ENCODE measurements at regions of chr10 and their contacts with region 1.

Region 1: DNA sequence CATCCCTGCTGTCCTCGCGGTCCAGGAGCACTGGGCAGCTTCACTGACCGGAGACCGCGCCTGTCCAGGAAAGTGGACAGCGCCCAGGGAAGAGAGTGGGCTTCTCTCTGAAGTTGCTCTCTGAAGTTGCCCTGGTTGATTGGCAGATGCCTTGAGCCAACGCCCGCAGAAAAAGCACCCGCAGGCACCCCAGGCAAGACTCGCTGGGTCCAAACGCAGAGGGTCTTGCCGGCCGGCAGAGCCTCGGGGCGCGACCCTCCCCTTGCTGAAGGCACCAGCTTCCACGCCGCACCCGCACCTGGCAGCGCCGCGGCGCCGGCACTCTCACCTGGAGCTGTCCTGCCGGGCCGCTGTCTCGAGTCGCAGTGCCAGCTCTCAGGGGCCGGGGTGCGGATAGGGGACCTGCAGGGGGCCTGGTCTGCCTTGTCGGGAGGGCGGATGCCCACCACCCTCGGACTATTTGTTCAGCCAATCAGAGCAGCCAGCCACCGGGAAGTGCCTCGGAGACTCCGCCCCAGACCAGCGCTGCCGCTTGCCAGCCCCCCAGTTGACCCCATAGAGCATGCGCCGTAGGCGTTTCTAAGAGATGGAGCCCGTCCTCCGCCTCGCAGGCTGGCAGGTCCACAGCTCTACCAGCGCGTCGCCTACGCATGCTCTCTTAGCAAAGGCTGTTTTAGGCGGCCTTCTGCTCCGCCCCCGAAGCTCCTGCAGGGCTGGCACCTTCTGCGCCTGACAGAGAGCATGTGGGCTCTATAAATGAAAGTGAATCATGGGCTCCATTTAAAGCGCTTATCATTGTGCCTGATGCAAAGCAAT is at the start of gene LIPA:
- DNase-seq: peak; percentile 95 to 96
- ATAC-seq: peak; percentile 99 to 100 (median 99)
- H3K4me3 ChIP-seq: peak within 1 kb of the TSS; percentile 79 to 99 (median 82)
- H3K27ac ChIP-seq: peak within 1 kb of the TSS; percentile 44 to 89 (median 82)
- H3K4me1 ChIP-seq: peaks cover 0 to 37% (median 8%) of the 10 kb centered on the region in 9 donors
- H3K27me3 ChIP-seq: no peaks in the 10 kb centered on the region
- CTCF ChIP-seq: no peak
- total RNA-seq, gene LIPA: 12.4 to 58.5 (median 15.3) TPM

Region 2: DNA sequence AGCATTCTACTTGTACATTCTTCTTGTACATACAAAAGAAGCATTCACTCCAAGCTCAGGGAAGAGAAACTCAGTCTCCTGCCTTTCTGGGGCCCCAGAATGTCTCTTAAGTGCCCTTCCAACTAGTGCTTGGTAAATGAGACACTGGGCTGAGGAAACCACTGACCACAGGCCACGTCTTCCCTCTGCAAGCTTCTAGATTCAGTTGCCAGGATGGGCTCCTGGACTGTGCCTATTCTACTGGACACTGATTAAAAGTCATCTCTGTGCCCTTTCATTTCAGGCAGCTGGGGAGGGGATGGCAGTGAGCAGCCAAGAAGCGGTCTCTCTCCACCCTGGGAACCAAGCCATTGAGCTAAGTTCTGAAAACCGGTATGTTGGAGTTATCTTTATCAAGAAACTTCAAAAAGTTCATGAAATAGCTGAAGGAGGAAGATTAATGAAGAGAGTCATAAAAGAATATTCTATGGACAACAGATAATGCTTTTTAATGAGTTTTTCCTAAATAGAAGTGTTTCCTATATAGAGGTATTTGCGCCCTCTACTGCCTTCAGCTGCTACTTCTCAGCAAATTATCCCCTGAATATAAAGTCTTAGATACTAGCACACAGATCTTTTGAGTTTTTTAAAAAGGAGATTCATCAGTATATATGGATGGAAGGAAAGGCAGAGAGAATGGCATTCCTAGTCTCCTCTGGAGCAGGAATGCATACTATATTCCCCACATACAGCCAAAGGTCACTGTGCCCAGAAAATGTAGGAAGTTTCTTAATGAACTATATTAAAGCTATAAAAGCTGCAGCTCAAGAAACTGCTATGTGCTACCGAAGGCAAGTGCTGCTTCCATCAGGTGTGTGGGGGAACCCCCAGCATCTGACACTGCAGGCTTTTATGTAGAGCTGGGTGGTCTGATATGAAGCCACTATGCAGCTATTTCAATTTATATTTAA is 117.8 kb after region 1 on chr10:
- intact Hi-C with region 1: loop called in 1 of 10 experiments (anchors 5 kb)
- DNase-seq: no peak
- ATAC-seq: peak in 4 of 8 donors; percentile 11 to 36 (median 28)
- H3K4me3 ChIP-seq: no peak overlapping the region
- H3K27ac ChIP-seq: peak overlapping the region in 4 of 10 donors; percentile 29 to 57 (median 42)
- H3K4me1 ChIP-seq: peaks cover 10 to 43% (median 26%) of the 10 kb centered on the region in 9 donors
- H3K27me3 ChIP-seq: no peaks in the 10 kb centered on the region
- CTCF ChIP-seq: peak in 8 of 9 donors; percentile 36 to 68 (median 60)

Region 3: DNA sequence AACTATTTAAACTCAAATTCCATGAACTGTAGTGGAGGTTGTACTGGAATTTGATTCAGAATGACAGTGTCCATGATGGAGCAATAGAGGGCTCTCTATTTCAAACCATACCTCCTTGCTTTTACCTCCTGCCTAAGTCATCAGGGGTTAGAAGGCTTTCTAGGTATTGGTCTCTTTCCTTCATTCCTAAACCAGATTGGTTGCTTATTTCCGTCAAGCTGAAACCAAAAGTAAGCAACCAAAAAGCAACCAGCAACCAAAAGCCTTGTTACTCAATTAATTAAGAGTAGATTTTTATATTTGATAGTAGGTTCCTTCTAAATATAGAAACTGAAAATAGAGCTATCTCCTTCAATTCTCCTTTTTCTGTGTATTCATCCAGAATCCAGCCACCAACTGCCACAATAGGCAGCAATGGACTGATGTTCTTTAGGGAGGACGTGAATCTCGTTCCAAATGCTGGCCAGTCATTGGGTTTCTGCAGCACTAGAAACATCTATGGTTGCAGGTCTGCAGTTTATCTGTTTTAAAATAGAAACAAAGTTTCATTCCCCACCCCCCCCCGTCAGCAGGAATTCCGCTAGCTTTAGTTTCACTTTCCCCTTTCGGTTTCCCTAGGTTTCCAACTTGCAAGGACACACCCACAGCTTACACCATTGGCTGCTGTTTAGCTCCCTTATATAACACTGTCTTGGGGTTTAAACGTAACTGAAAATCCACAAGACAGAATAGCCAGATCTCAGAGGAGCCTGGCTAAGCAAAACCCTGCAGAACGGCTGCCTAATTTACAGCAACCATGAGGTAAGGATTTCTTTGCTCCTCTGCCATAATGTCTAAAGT is 140.5 kb after region 1 on chr10 and contains the start of gene IFIT1:
- intact Hi-C with region 1: loop called in 2 of 10 experiments (anchors 5 kb)
- DNase-seq: peak in 1 of 2 donors; percentile 86
- ATAC-seq: peak; percentile 92 to 97 (median 96)
- H3K4me3 ChIP-seq: peak within 1 kb of the TSS; percentile 19 to 78 (median 62)
- H3K27ac ChIP-seq: peak within 1 kb of the TSS; percentile 55 to 97 (median 88)
- H3K4me1 ChIP-seq: peaks cover 0 to 61% (median 42%) of the 10 kb centered on the region in 9 donors
- H3K27me3 ChIP-seq: no peaks in the 10 kb centered on the region
- CTCF ChIP-seq: no peak
- total RNA-seq, gene IFIT1: 18.8 to 50.1 (median 30.1) TPM

Measured in heart right ventricle (tissue), 16 donors.